ENCODE measurements at regions of chr6 and their contacts with region 1.

Region 1: DNA sequence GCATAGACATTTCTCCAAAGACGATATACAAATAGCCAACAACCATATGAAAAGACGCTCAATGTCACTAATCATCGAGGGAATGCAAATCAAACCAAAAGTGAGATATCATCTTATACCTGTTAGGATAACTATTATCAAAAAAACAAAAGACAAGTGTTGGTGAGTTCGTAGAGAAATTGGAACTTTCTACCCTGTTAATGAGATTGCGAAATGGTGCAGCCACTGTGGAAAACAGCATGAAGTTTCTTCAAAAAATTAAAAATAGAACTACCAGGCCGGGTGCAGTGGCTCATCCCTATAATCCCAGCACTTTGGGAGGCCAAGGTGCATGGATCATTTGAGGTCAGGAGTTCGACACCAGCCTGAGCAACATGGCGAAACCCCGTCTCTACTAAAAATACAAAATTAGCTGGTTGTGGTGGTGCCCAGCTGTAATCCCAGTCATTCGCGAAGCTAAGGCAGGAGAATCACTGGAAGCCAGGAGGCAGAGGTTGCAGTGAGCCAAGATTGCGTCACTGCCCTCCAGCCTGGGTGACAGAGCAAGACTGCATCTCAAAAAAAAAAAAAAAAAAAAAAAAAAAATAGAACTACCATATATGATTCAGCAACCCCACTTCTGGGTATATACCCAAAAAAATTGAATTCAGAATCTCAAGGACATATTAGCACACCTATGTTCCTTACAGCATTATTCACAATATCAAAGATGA is 170.0 kb upstream of the ZNF184 start:
- DNase-seq: no peak
- H3K4me3 ChIP-seq: no peak overlapping the region
- H3K27ac ChIP-seq: no peak overlapping the region
- H3K27me3 ChIP-seq: no peaks in the 10 kb centered on the region
- CTCF ChIP-seq: no peak

Region 2: DNA sequence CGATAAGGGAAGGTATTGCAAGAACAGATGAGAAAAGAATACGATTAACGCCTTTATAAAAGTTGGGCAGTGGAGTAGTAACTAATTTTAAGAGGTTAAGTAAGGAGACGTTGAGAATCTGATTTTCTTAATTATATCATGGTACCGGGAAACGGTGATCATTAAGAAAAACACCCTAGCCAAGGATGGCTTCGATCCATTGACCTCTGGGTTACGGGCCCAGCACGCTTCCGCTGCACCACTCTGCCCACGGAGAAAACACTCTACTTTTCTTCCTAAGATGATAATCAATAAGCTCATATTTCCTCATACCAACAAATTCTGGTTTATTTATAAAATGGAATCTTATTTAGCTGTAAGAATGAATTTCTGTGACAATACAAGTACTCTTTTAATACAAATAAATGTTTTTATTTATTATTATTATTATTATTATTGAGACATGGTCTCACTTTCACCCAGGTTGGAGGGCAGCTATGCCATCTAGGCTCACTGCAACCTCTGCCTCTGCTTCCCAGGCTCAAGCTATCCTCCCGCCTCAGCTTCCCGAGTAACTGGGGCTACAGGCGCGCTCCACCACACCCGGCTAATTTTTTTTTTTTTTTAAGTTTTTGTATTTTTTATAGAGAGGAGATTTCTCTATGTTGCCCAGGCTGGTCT is 339.2 kb before region 1 on chr6:
- CTCF ChIA-PET with region 1: no interaction called
- POLR2A ChIA-PET with region 1: interaction called, 10 read pairs
- DNase-seq: no peak
- H3K4me3 ChIP-seq: no peak overlapping the region
- H3K27ac ChIP-seq: no peak overlapping the region
- H3K27me3 ChIP-seq: no peaks in the 10 kb centered on the region
- CTCF ChIP-seq: no peak

Region 3: GRCh38 chr6:27400877-27401642 is 241.8 kb before region 1 on chr6:
- CTCF ChIA-PET with region 1: no interaction called
- POLR2A ChIA-PET with region 1: no interaction called
- DNase-seq: no peak
- H3K4me3 ChIP-seq: no peak overlapping the region
- H3K27ac ChIP-seq: no peak overlapping the region
- H3K27me3 ChIP-seq: no peaks in the 10 kb centered on the region
- CTCF ChIP-seq: no peak

Region 4: DNA sequence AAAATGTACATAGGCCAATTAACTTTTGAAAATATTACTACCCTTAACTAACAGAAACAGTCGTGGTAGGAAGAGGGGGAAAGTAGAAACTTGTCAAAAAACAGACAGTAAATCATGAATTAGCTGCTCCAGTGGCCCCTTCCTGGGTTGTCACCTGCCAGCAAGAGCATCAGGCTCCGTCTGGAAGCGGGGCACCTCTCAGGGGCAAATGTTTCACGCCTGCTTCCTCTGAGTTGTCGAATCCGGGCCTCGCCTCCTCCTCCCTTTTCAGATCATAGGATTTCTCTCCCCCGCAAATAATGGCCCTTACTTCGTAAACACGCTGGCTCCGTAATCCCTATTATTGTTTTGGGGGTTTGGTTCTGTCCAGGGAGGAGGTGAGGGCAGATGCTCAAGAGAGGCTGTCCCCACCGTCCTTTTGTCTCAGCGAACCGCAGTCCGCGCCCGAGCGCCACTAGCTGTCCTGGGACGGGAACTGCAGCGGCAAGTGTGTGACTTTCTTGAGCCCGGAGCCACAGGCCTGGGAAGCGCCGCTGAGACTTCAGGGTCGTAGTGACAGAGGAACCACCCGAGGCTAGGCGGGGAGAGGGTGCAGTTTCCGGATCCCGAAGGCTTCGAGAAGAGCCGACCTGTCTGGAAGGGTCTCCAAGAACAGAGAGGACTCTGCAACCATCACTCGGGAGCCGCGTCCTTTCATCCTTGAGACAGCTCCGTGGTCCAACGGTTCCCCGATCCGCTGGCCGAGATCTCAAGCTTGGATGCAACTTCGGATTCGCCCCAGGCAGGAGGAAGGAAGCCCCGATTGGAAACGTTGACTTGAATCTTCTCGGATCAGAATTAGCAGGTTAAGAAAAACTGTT is 44.5 kb after region 1 on chr6:
- CTCF ChIA-PET with region 1: no interaction called
- POLR2A ChIA-PET with region 1: no interaction called
- DNase-seq: no peak
- H3K4me3 ChIP-seq: peak overlapping the region; percentile 72
- H3K27ac ChIP-seq: no peak overlapping the region
- H3K27me3 ChIP-seq: no peaks in the 10 kb centered on the region
- CTCF ChIP-seq: peak; percentile 65

Measured in AG04450 (cell line).